ENCODE measurements at regions of chr2 and their contacts with region 1.

Region 1: DNA sequence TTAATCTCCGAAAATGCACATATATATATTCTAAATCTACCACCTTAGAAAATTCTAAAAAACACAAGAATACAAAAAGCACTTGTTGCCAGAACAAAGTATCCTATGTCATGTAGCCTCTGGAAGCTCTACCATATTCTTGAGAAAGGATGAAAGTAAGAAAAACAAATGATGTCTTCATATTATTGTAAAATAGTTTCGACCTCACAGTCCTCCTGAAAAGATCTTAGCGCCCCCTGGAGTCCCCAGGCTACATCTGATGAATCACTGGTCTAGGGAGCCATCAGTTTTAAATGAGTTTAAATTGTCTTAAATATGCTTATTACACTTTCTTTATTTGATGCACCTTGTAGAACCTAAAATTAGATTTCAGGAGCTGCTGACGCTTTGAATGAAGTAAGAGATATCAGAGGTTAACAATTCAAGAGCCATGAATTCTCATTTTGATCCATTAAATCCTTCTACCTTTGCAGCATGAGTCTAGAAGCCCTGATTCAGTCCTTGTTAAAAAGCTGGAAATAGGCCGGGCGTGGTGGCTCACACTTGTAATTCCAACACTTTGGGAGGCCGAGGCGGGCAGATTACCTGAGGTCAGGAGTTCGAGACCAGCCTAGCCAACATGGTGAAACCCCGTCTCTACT is 138.8 kb downstream of the MCFD2 start:
- DNase-seq: peak; percentile 51 to 81 (median 64)
- ATAC-seq: no peak
- H3K4me3 ChIP-seq: no peak overlapping the region
- H3K27ac ChIP-seq: no peak overlapping the region
- H3K4me1 ChIP-seq: peaks cover 23% of the 10 kb centered on the region
- H3K27me3 ChIP-seq: no peaks in the 10 kb centered on the region

Region 2: DNA sequence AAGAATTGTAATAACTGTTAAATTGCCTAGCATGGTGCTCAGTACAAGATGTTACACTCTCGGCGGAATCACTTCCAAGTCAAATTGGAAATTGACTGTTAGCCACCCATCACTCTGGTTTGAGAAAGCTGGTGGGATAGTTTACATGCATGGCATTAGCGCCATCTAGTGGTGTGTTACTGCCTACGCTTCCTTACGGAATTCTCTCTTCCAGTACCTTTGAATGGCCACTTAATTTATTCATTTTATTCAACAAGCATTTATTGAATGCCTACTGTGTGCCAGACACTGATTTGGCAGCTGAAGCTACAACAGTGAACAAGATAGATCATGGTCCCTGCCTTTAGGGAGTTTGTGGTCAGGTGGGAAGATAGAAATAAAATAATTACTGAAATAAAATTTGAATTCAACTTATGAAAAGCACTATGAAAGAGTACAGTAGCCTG is 126.2 kb before region 1 on chr2:
- intact Hi-C with region 1: loop called in 2 of 4 experiments (anchors 10 kb)
- DNase-seq: peak in 2 of 3 donors; percentile 62 to 77
- ATAC-seq: peak; percentile 42 to 77
- H3K4me3 ChIP-seq: no peak overlapping the region
- H3K27ac ChIP-seq: no peak overlapping the region
- H3K4me1 ChIP-seq: peaks cover 2% of the 10 kb centered on the region
- H3K27me3 ChIP-seq: no peaks in the 10 kb centered on the region

Region 3: DNA sequence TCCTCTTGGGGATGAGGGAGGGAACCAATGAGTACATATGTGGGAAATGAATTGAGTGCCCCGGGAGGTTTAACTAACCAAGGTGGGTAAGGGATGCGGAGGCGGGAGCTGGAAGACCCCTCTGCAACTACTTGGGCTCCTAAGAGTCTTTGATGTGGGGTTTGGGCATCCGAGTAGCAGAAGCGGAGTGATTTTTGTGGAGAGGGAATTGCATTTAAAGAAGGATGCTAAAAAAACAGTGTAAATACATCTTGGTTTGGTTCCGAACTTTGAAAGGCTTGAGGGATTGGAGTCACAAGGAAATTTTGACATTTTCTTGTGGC is 76.9 kb before region 1 on chr2:
- intact Hi-C with region 1: loop called in 1 of 4 experiments (anchors 10 kb)
- DNase-seq: peak in 1 of 3 donors; percentile 40
- ATAC-seq: no peak
- H3K4me3 ChIP-seq: peak overlapping the region; percentile 94
- H3K27ac ChIP-seq: peak overlapping the region; percentile 90
- H3K4me1 ChIP-seq: peaks cover 5% of the 10 kb centered on the region
- H3K27me3 ChIP-seq: no peaks in the 10 kb centered on the region

Region 4: GRCh38 chr2:46847235-46848068 is 70.6 kb after region 1 on chr2:
- intact Hi-C with region 1: no loop called
- DNase-seq: peak; percentile 93 to 96 (median 96)
- ATAC-seq: peak; percentile 81 to 82
- H3K4me3 ChIP-seq: no peak overlapping the region
- H3K27ac ChIP-seq: peak overlapping the region; percentile 97
- H3K4me1 ChIP-seq: peaks cover 44% of the 10 kb centered on the region
- H3K27me3 ChIP-seq: no peaks in the 10 kb centered on the region

Measured in right cardiac atrium (tissue), 5 donors.